Right ventricle myocardium superior (tissue), 1 donor: ENCODE measurements at regions of chr15 and their contacts with region 1.

Region 1: GRCh38 chr15:73639464-73640188 is 6.4 kb upstream of the NPTN start:
- DNase-seq: no peak
- ATAC-seq: no peak

Region 2: DNA sequence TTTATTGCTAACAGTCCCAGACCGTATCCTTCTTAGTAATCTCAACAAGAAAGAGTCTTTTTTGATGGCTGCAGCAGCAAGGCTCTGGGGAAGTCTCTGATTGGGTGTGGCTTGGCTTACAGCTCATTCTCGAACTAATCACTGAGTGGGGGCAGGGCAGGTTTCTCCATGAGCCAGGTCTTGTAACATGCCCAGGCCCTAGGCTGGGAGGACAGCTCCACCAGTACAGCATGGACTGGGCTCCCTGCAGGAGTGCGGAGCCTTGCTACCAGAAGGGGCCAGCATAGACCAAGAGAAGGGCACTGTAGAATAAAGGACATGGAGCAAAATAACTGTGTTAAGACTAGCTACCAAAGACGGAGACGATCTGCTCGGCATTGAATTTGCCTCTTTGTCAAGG is 51.8 kb after region 1 on chr15:
- intact Hi-C with region 1: loop called (anchors 5 kb)
- DNase-seq: peak; percentile 78
- ATAC-seq: peak; percentile 84